ENCODE measurements at regions of chr11 and their contacts with region 1.

Region 1: GRCh38 chr11:66545701-66546367 is at the start of gene ZDHHC24:
- DNase-seq: peak; percentile 99
- ATAC-seq: peak; percentile 98
- total RNA-seq, gene ZDHHC24: 4.0 TPM

Region 2: GRCh38 chr11:66466225-66467027 is 79.4 kb before region 1 on chr11 and contains the start of gene PELI3:
- intact Hi-C with region 1: loop called (anchors 1 kb)
- DNase-seq: peak; percentile 95
- ATAC-seq: peak; percentile 99
- total RNA-seq, gene PELI3: 8.4 TPM

Region 3: GRCh38 chr11:66510271-66510989 is 35.4 kb before region 1 on chr11 and contains the start of gene BBS1:
- intact Hi-C with region 1: loop called (anchors 1 kb)
- DNase-seq: peak; percentile 95
- ATAC-seq: peak; percentile 94
- total RNA-seq, gene BBS1: 20.9 TPM

Region 4: GRCh38 chr11:66569076-66569475 is 23.2 kb after region 1 on chr11:
- intact Hi-C with region 1: loop called (anchors 1 kb)
- DNase-seq: no peak
- ATAC-seq: no peak

Measured in Right ventricle myocardium inferior (tissue), 1 donor.